ENCODE measurements at regions of chr6 and their contacts with region 1.

Region 1: DNA sequence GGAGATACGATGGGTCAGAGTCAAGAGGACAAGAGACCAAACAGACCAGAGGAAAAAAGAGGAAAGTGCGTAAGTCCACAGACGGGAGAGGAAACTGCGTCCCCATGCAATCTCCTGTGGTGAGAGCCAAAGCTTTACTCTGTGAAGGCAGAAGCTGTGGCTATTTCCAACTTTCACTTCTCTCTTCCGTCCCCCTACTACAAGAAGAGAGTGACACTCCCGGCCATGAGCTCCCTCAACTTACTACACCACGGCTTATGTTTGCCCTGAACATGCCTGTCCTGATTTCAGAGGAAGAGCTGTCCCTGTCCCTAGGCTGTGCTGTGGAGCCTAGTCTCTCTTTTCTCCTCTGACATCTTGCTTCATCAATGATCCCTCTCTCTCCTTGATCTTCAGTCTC is 11.5 kb upstream of the SSR1 start:
- DNase-seq: peak; percentile 28 to 68 (median 64)
- H3K4me3 ChIP-seq: peak overlapping the region in 5 of 7 experiments; percentile 17 to 72 (median 41)
- H3K27ac ChIP-seq: no peak overlapping the region
- H3K4me1 ChIP-seq: peaks cover 0 to 17% (median 7%) of the 10 kb centered on the region in 4 experiments
- H3K27me3 ChIP-seq: no peaks in the 10 kb centered on the region

Region 2: GRCh38 chr6:7335519-7335918 is 11.0 kb after region 1 on chr6:
- CTCF ChIA-PET with region 1: interaction called, 16 read pairs
- POLR2A ChIA-PET with region 1: no interaction called
- DNase-seq: no peak
- H3K4me3 ChIP-seq: no peak overlapping the region
- H3K27ac ChIP-seq: no peak overlapping the region
- H3K4me1 ChIP-seq: no peaks in the 10 kb centered on the region
- H3K27me3 ChIP-seq: no peaks in the 10 kb centered on the region

Region 3: GRCh38 chr6:7341989-7342742 is 17.6 kb after region 1 on chr6:
- CTCF ChIA-PET with region 1: interaction called, 16 read pairs
- POLR2A ChIA-PET with region 1: no interaction called
- DNase-seq: peak in 2 of 3 donors; percentile 56 to 65
- H3K4me3 ChIP-seq: no peak overlapping the region
- H3K27ac ChIP-seq: no peak overlapping the region
- H3K4me1 ChIP-seq: no peaks in the 10 kb centered on the region
- H3K27me3 ChIP-seq: no peaks in the 10 kb centered on the region

Measured in common myeloid progenitor, CD34-positive (primary cell).